ENCODE measurements at regions of chr17 and their contacts with region 1.

Region 1: DNA sequence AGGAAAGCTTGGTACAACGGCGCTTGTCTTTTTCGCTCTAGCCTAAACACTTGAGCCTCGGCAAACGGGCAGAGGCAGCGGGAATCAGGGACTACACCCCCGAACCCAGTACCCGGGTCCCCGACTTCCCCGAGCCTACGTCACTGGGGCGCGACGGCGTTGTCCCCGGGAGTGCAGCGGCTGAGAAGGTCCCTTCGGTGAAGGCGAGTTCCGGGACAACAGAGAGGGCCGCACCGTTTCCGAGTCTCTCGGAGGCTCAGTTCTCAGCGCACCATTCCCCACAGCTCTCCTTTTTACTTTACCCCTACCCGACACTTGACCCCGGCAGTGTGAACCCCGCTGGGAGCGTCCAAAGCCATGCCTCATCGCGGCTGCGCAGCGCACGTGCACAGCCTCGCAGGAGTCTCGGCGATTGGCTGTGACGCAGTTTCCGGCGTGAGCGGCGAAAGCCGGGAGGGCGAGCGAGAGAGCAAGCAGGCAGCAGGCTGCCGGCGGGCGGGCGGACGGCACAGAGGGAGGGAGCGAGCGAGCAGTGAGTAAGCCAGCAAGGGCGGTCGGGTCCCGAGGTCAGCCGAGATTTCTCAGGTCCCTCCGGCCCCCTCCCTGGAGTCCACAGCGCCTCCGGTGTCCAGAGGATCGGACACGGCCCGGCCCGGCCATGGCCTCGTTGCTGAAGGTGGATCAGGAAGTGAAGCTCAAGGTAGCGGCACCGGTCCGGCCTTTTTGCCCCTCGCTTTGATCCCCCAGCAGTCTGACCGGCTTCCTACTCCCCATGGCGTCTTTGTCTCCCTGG is at the start of gene PSME3:
- DNase-seq: peak; percentile 88
- H3K4me3 ChIP-seq: peak within 1 kb of the TSS; percentile 90 to 94
- H3K27ac ChIP-seq: peak within 1 kb of the TSS; percentile 81
- H3K4me1 ChIP-seq: no peaks in the 10 kb centered on the region
- H3K27me3 ChIP-seq: no peaks in the 10 kb centered on the region
- CTCF ChIP-seq: peak in 2 of 4 experiments; percentile 8 to 20
- POLR2A ChIP-seq: peak; percentile 75
- total RNA-seq, gene PSME3: 68.5 to 71.1 TPM

Region 2: DNA sequence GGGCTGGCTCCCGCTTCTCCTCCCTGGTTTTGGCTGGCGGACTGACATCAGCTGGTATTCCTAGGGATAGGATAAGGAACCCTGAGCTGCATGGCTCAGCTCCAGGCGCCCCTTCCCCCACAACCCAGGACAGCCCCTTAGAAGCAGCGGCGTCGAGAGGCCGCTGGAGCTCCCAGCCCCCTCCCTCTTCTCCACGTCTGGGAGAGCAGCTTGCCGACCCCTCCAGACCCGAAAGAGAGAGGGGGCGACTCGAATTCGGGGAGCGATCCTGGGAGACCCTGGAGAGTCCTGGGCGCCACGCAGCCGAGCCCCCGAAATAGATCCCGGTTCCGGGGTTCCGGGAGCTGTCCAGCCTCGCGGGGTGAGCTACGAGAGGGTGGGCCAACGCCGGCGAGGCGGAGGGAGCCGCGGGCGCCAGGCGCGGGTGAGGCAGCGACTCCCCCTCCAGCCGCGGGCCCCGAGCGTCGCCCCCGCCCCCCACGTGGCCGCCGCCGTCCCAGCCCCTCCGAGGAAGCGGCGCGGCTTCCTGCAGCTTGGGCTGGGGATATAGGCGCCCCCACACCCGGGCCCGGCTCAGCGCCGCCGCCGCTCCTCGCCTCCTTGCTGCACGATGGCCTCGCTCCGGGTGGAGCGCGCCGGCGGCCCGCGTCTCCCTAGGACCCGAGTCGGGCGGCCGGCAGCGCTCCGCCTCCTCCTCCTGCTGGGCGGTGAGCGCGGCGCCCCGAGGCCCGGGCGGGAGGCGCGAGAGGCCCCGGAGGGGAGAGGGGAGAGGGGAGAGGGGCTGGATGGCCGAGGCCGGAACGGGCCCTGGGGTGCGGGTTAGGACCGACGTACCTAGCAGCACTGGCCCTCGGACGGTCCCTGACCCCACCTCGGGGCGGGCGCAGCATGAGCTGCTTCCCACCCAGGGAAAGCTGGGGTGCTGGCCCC is 72.3 kb before region 1 on chr17 and contains the start of gene RAMP2:
- intact Hi-C with region 1: no loop called
- DNase-seq: no peak
- H3K4me3 ChIP-seq: peak within 1 kb of the TSS; percentile 48 to 52
- H3K27ac ChIP-seq: peak within 1 kb of the TSS; percentile 47 to 53
- H3K4me1 ChIP-seq: no peaks in the 10 kb centered on the region
- H3K27me3 ChIP-seq: no peaks in the 10 kb centered on the region
- CTCF ChIP-seq: peak in 1 of 4 experiments; percentile 13
- POLR2A ChIP-seq: no peak
- total RNA-seq, gene RAMP2: 16.3 TPM

Region 3: DNA sequence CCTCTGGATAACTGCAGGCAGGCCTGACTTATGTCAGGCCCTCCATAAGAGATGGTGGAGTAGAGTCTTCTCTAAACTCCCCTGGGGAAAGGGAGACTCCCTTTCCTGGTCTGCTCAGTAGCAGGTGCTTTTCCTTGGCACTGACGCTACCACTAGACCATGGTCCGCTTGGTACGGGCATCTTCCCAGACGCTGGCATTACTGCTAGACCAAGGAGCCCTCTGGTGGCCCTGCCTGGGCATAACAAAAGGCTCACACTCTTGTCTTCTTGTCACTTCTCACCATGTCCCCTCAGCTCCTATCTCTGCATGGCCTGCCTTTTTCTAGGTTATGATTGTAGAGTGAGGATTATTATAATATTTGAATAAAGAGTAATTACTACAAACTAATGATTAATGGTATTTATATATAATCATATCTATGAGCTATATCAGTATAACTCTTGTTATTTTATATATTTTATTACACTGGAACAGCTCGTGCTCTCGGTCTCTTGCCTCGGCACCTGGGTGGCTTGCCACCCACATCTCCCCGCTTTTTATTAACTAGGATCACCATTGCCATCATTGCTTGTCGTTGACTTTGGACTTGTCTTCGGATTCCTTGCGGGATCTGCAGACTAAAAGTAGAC is 505.8 kb after region 1 on chr17:
- intact Hi-C with region 1: loop called (anchors 10 kb)
- DNase-seq: peak; percentile 81
- H3K4me3 ChIP-seq: no peak overlapping the region
- H3K27ac ChIP-seq: no peak overlapping the region
- H3K4me1 ChIP-seq: peaks cover 6% of the 10 kb centered on the region
- H3K27me3 ChIP-seq: no peaks in the 10 kb centered on the region
- CTCF ChIP-seq: peak in 3 of 4 experiments; percentile 53 to 82 (median 77)
- POLR2A ChIP-seq: no peak

Measured in prostate gland (tissue), 2 donors.